ENCODE measurements at regions of chr13 and their contacts with region 1.

Region 1: GRCh38 chr13:38582133-38582532 is 104.7 kb upstream of the FREM2 start:
- DNase-seq: peak; percentile 20
- H3K4me3 ChIP-seq: no peak overlapping the region
- H3K27ac ChIP-seq: no peak overlapping the region
- H3K4me1 ChIP-seq: no peaks in the 10 kb centered on the region
- H3K27me3 ChIP-seq: no peaks in the 10 kb centered on the region
- CTCF ChIP-seq: peak; percentile 65
- EP300 ChIP-seq: no peak
- RAD21 ChIP-seq: peak; percentile 72

Region 2: GRCh38 chr13:38570706-38571105 is 11.4 kb before region 1 on chr13:
- CTCF ChIA-PET with region 1: interaction called, 12 read pairs
- POLR2A ChIA-PET with region 1: no interaction called
- DNase-seq: no peak
- H3K4me3 ChIP-seq: no peak overlapping the region
- H3K27ac ChIP-seq: no peak overlapping the region
- H3K4me1 ChIP-seq: no peaks in the 10 kb centered on the region
- H3K27me3 ChIP-seq: no peaks in the 10 kb centered on the region
- CTCF ChIP-seq: no peak
- EP300 ChIP-seq: no peak
- RAD21 ChIP-seq: no peak

Region 3: GRCh38 chr13:38641164-38641951 is 59.2 kb after region 1 on chr13:
- CTCF ChIA-PET with region 1: no interaction called
- POLR2A ChIA-PET with region 1: no interaction called
- DNase-seq: peak; percentile 5
- H3K4me3 ChIP-seq: no peak overlapping the region
- H3K27ac ChIP-seq: no peak overlapping the region
- H3K4me1 ChIP-seq: no peaks in the 10 kb centered on the region
- H3K27me3 ChIP-seq: no peaks in the 10 kb centered on the region
- CTCF ChIP-seq: peak; percentile 35; the same call in 1 of the 2 replicates
- EP300 ChIP-seq: no peak
- RAD21 ChIP-seq: no peak